ENCODE measurements at regions of chr13 and their contacts with region 1.

Region 1: DNA sequence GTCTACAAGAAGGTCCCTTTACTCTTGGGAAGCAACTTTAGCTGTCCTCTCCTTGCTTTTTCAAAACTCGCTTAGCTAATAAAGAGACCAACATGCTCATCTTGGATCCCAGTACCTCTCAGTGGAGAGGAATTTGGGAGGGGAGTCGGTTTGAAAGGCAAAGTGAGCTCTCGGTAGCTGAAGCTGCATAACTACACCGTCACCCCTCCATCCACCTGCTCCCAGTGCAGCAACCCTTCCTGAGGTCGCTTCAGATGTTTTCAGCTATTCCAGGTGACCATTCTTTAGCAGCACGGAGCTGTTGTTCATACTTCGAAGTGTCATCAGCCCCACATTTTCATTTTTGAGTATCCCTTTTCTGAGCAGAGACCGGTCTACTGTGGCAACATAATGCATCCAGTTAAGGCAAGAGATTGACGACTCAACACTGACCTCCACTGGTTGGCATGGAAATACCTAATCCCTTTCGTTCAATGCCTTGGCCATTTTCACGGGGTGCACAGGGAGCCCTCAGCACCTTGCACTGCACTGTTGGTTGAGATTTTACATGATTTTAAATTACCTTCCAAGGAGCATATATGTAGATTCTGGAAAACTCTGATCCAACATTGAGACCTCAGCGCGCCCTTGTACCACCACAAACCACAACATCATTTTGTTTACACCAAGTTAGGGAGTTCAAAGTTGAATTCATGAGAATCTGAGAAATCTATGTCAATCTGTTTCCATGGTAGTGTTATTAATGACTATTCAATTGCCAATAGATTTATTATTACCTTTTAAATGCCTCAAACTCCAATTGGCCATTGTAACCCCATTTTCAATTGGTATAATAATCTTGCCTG is 42.2 kb downstream of the DLEU7 start:
- DNase-seq: peak; percentile 9
- H3K4me3 ChIP-seq: no peak overlapping the region
- H3K27me3 ChIP-seq: no peaks in the 10 kb centered on the region
- CTCF ChIP-seq: peak; percentile 70

Region 2: GRCh38 chr13:49976314-49977258 is 824.7 kb before region 1 on chr13:
- CTCF ChIA-PET with region 1: interaction called, 13 read pairs
- POLR2A ChIA-PET with region 1: no interaction called
- DNase-seq: no peak
- H3K4me3 ChIP-seq: no peak overlapping the region
- H3K27me3 ChIP-seq: no peaks in the 10 kb centered on the region
- CTCF ChIP-seq: peak; percentile 88

Measured in BJ (cell line).